Breast epithelium (tissue), 4 donors: ENCODE measurements at regions of chr17 and their contacts with region 1.

Region 1: GRCh38 chr17:77372444-77373298 is 231.9 kb downstream of the SEC14L1 start:
- DNase-seq: peak in 1 of 2 donors; percentile 71
- H3K4me3 ChIP-seq: peak overlapping the region; percentile 79 to 92 (median 87)
- H3K27ac ChIP-seq: peak overlapping the region; percentile 93 to 95
- H3K4me1 ChIP-seq: peaks cover 48% of the 10 kb centered on the region in 2 donors
- H3K27me3 ChIP-seq: no peaks in the 10 kb centered on the region
- CTCF ChIP-seq: no peak
- POLR2A ChIP-seq: no peak

Region 2: DNA sequence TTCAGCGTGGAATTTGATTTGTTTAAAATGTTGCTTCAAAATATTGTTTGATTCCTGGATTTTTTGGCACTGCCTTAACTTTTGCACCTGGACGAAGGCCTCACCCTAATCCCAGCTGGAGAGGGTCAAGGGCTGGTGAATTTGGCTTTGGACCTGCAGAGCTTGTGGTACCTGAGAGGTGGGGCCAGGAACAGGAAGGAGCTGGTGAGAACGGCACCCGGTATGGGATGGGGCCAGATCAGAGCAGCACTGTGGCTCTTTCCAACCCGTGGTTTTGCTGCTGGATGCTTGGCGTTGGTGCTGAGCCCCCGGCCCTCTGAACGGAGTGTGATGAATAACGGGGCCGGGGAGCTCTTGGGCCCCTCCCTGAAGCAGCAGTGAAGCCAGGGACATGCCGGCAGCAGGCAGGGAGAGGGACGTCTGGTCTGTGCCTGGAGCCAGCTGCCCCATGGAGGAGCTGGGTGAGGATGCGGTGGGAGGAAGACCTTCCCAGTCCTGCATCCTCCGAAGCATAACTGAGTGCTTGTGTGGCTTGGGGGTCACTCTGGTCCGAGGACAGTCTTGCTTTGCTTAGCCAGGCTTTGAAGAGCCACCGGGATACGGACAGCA is 43.5 kb after region 1 on chr17:
- intact Hi-C with region 1: loop called (anchors 2 kb)
- DNase-seq: no peak
- H3K4me3 ChIP-seq: no peak overlapping the region
- H3K27ac ChIP-seq: peak overlapping the region; percentile 17 to 71
- H3K4me1 ChIP-seq: peaks cover 8 to 18% of the 10 kb centered on the region in 2 donors
- H3K27me3 ChIP-seq: no peaks in the 10 kb centered on the region
- CTCF ChIP-seq: no peak
- POLR2A ChIP-seq: no peak